AG04450 (cell line): ENCODE measurements at regions of chr12 and their contacts with region 1.

Region 1: GRCh38 chr12:114508529-114509129 is 102.7 kb upstream of the TBX5 start:
- DNase-seq: peak; percentile 59
- H3K4me3 ChIP-seq: no peak overlapping the region
- H3K27ac ChIP-seq: no peak overlapping the region
- H3K27me3 ChIP-seq: peaks cover 3% of the 10 kb centered on the region
- CTCF ChIP-seq: peak; percentile 82

Region 2: GRCh38 chr12:113933201-113933786 is 575.3 kb before region 1 on chr12:
- CTCF ChIA-PET with region 1: no interaction called
- POLR2A ChIA-PET with region 1: no interaction called
- DNase-seq: peak; percentile 32
- H3K4me3 ChIP-seq: no peak overlapping the region
- H3K27ac ChIP-seq: peak overlapping the region; percentile 61
- H3K27me3 ChIP-seq: no peaks in the 10 kb centered on the region
- CTCF ChIP-seq: no peak

Region 3: DNA sequence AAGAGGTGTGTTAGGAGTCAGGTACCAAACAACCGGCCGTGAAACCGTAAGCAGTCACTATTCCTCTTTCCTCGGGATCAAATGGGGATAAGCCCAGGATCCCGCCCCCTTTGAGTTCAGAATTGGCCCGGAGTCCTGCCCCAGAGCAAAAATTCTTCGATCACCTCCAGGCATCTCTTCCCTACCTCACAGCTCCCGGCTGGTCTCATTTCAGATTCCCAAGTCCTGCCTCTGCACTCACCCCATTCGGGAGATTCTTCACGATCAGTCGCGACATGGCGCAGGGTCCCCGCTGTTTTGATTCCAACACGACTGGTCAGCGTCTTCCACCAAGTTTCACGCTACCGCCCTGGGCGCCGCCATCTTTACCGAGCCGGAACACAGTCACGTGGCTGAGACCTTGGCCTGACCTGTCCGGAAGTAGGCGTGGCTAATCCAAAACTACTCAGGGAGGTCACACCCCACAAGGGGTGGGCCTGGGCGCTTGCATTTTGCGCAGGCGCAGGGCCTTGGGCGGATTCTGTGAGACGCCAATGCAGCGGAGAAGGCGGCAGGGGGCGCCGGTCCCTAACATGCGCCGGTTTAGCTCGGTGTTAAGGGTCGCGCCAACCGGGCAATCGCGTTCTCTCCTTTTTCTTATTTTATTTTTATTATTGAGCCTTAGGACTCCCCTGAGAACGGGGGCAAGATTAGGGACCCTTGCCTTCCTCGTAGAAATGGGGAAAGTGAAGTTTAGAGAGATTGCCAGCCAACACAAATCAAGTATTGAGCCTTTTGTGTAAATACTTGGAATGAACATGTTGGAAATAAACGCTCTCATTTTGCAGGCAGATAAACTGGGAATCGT is 542.5 kb before region 1 on chr12 and contains the start of gene RBM19:
- CTCF ChIA-PET with region 1: interaction called, 30 read pairs
- POLR2A ChIA-PET with region 1: no interaction called
- DNase-seq: peak; percentile 94
- H3K4me3 ChIP-seq: peak within 1 kb of the TSS; percentile 92
- H3K27ac ChIP-seq: peak within 1 kb of the TSS; percentile 52
- H3K27me3 ChIP-seq: peaks cover 7% of the 10 kb centered on the region
- CTCF ChIP-seq: peak; percentile 94
- polyA plus RNA-seq, gene RBM19: 10.6 and 12.4 TPM in 2 replicates

Region 4: GRCh38 chr12:114166362-114166761 is 342.3 kb before region 1 on chr12:
- CTCF ChIA-PET with region 1: interaction called, 81 read pairs
- POLR2A ChIA-PET with region 1: no interaction called
- DNase-seq: peak; percentile 6
- H3K4me3 ChIP-seq: no peak overlapping the region
- H3K27ac ChIP-seq: no peak overlapping the region
- H3K27me3 ChIP-seq: no peaks in the 10 kb centered on the region
- CTCF ChIP-seq: peak; percentile 68

Region 5: DNA sequence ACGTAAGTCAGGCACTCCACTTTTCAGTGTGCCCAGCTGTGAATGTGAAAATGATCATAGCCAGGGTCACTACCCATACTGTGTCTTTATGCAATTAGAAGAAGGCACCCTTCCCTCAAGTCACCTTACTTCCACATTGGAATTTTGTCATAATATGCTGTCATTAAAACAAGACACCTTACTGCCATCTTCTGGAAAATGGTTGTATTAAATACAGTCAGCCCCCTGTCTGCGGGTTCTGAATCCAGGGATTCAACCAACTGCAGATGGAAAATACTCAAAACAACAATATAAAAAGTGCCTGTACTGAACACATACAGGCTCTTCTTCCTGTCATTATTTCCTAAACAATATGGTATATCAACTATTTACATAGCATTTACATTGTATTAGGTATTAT is 32.5 kb before region 1 on chr12:
- CTCF ChIA-PET with region 1: interaction called, 23 read pairs
- POLR2A ChIA-PET with region 1: no interaction called
- DNase-seq: peak; percentile 11
- H3K4me3 ChIP-seq: no peak overlapping the region
- H3K27ac ChIP-seq: no peak overlapping the region
- H3K27me3 ChIP-seq: peaks cover 48% of the 10 kb centered on the region
- CTCF ChIP-seq: peak; percentile 63

Region 6: GRCh38 chr12:114520236-114520635 is 11.6 kb after region 1 on chr12:
- CTCF ChIA-PET with region 1: interaction called, 15 read pairs
- POLR2A ChIA-PET with region 1: no interaction called
- DNase-seq: no peak
- H3K4me3 ChIP-seq: no peak overlapping the region
- H3K27ac ChIP-seq: no peak overlapping the region
- H3K27me3 ChIP-seq: peaks cover 4% of the 10 kb centered on the region
- CTCF ChIP-seq: no peak

Region 7: DNA sequence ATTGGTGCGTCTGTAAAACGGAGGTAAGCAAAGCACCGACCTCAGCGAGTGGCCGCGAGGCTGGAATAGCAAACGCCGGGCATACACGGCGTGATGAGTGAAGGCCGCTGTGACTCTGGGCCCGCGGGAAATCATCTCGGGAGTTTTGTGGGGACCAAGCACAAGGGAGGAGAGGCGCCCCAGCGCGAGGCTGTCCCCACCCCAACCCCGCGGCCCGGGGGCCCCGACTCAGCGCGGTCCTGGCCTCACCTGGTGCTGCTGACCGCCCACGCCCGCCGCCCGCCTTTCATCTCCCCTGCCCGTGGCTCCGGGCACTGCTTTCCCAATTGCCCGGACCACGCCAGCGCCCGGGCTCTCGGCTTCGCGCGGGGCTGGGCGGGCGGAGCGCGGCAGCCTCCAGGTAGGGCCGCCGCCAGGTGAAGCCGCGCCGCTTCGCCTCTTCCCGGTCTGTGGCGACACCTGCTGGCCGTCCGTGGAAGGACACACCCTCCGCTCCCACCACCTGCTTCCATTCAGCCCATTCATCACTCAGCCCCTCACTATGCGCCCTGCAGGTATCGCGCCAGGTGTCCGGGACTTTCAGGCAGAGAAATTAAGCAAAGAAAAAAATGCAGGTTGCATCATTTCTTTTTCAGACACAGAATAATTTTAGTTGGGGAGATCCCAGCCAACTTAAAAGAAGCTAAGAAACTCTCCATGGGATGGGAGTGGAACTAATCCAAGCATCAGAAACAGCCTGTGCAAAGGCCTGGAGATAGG is 1408.5 kb after region 1 on chr12:
- CTCF ChIA-PET with region 1: interaction called, 15 read pairs
- POLR2A ChIA-PET with region 1: no interaction called
- DNase-seq: no peak
- H3K4me3 ChIP-seq: no peak overlapping the region; the same call in 1 of the 2 replicates
- H3K27ac ChIP-seq: no peak overlapping the region
- H3K27me3 ChIP-seq: peaks cover 5% of the 10 kb centered on the region
- CTCF ChIP-seq: peak; percentile 83